Gastrocnemius medialis (tissue), 4 donors: ENCODE measurements at regions of chr7 and their contacts with region 1.

Region 1: GRCh38 chr7:33062782-33063443 is 337 bp upstream of the NT5C3A start:
- DNase-seq: peak; percentile 87 to 88
- ATAC-seq: peak; percentile 96
- H3K4me3 ChIP-seq: peak overlapping the region; percentile 74 to 97 (median 75)
- H3K27ac ChIP-seq: peak overlapping the region; percentile 90 to 98 (median 94)
- H3K4me1 ChIP-seq: peaks cover 22 to 30% of the 10 kb centered on the region in 2 donors
- H3K27me3 ChIP-seq: no peaks in the 10 kb centered on the region
- CTCF ChIP-seq: no peak
- POLR2A ChIP-seq: peak in 1 of 2 donors; percentile 53

Region 2: GRCh38 chr7:32495298-32496176 is 567.4 kb before region 1 on chr7 and contains the start of gene AVL9:
- in situ Hi-C with region 1: loop called in 1 of 4 experiments (anchors 25 kb)
- intact Hi-C with region 1: no loop called
- DNase-seq: peak; percentile 98
- ATAC-seq: peak; percentile 89 to 94
- H3K4me3 ChIP-seq: peak within 1 kb of the TSS; percentile 76 to 98 (median 88)
- H3K27ac ChIP-seq: peak within 1 kb of the TSS; percentile 91 to 98 (median 96)
- H3K4me1 ChIP-seq: peaks cover 21% of the 10 kb centered on the region in 2 donors
- H3K27me3 ChIP-seq: no peaks in the 10 kb centered on the region
- CTCF ChIP-seq: peak in 1 of 5 experiments; percentile 5
- POLR2A ChIP-seq: peak; percentile 79 to 88
- total RNA-seq, gene AVL9: 22.3 to 27.6 (median 25.5) TPM

Region 3: DNA sequence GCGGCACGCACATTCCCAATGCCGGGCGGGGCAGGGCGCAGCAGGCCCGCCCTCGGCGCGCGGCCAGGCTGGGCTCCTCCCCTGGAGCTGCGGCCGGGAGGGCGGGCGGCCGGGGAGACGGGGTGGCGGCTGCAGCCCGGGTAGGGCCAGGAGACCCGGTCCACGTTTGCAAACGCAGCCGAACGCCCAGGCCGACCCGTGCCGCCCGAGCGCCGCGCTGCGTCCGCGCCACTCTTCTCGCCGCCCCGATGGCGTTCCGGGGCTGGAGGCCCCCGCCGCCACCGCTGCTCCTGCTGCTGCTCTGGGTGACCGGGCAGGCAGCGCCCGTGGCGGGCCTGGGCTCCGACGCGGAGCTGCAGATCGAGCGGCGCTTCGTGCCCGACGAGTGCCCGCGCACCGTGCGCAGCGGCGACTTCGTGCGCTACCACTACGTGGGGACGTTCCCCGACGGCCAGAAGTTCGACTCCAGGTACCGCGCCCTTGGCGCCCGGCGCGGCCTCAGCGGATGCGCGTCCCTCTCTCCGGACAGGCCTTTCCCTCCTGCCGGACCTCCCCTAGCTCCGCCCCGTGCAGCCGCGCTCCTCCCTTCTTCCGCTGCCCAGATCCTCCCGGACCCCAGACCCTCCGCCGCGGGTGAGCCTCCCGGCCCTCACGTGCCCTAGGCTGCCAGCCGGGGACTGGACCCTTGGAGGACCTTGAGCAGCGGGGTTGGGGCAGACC is 105.4 kb before region 1 on chr7 and contains the start of gene FKBP9:
- in situ Hi-C with region 1: loop called in 1 of 4 experiments (anchors 25 kb)
- intact Hi-C with region 1: no loop called
- DNase-seq: peak; percentile 59 to 68
- ATAC-seq: peak; percentile 83 to 84
- H3K4me3 ChIP-seq: peak within 1 kb of the TSS; percentile 72 to 97 (median 84)
- H3K27ac ChIP-seq: peak within 1 kb of the TSS; percentile 76 to 93 (median 88)
- H3K4me1 ChIP-seq: peaks cover 8 to 16% of the 10 kb centered on the region in 2 donors
- H3K27me3 ChIP-seq: no peaks in the 10 kb centered on the region
- CTCF ChIP-seq: no peak
- POLR2A ChIP-seq: peak; percentile 44 to 59
- total RNA-seq, gene FKBP9: 32.1 to 72.1 (median 35.3) TPM

Region 4: GRCh38 chr7:33040803-33041516 is 22.0 kb before region 1 on chr7:
- in situ Hi-C with region 1: no loop called
- intact Hi-C with region 1: loop called (anchors 2 kb)
- DNase-seq: peak; percentile 73
- ATAC-seq: peak; percentile 90 to 91
- H3K4me3 ChIP-seq: peak overlapping the region; percentile 54 to 68 (median 62)
- H3K27ac ChIP-seq: peak overlapping the region; percentile 84 to 95 (median 90)
- H3K4me1 ChIP-seq: peaks cover 55 to 61% of the 10 kb centered on the region in 2 donors
- H3K27me3 ChIP-seq: no peaks in the 10 kb centered on the region
- CTCF ChIP-seq: no peak
- POLR2A ChIP-seq: peak; percentile 71 to 92

Region 5: DNA sequence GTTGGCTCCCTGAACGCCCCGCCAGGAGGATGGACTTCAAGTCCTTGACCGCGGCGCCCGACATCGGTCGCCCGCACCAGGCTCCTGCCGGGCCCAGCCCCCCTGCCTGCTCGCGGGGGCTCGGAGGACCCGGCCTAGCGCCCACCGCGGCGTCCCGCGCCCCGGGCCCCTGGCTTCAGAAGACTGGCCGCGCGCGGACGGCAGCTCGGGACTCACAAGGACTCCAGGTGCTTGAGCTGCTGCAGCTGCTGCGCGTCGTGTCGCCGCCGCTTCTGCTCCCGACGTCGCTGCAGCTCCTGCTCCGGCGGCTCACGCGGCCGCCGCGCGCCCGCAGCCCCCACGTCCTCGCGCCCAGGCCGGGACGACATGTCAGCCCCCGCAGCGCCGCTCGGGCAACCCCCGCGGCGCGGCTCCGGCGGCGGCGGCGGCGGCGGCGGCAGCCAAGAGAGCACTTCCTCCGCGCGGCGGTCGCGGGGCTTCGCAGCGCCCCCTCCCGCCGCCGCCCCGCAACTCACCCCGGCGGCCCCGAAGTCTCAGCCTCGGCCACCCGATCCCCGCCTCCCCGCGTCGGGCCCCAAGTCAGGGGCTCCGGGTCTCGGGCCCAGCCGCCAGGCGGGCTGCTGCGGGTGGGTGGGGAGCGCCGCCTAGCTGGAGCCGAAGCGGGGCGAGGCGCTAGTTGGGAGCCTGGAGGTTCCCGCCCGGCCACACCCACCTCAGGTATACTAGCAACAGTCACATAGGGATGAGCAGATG is 46.3 kb after region 1 on chr7 and contains the start of gene RP9:
- in situ Hi-C with region 1: no loop called
- intact Hi-C with region 1: loop called (anchors 1 kb)
- DNase-seq: peak; percentile 12 to 40
- ATAC-seq: peak; percentile 89 to 92
- H3K4me3 ChIP-seq: peak within 1 kb of the TSS; percentile 64 to 92 (median 80)
- H3K27ac ChIP-seq: peak within 1 kb of the TSS; percentile 64 to 86 (median 80)
- H3K4me1 ChIP-seq: peaks cover 25 to 31% of the 10 kb centered on the region in 2 donors
- H3K27me3 ChIP-seq: no peaks in the 10 kb centered on the region
- CTCF ChIP-seq: peak; percentile 45 to 78 (median 59)
- POLR2A ChIP-seq: peak; percentile 20 to 56
- total RNA-seq, gene RP9: 13.0 to 23.9 (median 20.1) TPM

Region 6: DNA sequence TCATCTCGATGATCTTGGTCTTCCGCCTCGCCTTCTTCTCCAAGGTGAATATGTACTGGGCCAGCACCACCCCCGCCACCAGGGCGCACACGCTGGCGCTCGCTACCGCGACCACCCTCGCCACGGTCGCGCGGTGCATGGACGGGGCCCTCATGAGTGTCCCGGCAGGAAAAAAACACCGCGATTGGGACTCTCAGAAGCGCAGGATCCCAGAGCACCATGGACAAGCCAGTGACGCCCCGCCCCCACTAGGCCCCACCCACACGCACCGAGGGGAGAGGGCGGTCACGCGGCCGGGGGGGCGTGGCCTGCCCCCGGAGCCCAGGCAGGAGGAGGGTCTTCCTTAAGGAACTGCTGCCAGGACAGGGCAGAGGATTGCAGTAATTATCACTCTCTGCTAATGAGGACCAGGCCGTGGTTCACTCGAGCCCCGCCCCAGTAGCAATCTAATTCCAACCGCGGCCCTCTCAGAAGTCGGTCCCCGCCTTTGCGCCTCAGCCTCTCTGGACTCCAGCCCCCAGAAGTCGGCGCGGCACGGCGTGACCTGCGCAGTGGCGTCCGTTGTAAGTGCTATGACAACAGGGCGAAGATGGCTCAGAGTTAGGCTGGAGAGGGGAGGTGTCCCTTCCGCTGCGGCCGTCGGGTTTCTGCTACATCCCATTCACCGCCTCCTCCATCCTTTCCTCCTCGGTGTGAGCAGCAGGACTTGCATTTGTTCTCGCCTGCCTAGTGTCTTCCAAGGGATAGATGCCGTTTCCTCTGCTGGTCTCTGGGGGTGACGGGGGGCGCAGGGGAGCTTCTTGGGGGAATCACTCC is 66.3 kb after region 1 on chr7 and contains the start of gene BBS9:
- in situ Hi-C with region 1: no loop called
- intact Hi-C with region 1: loop called (anchors 2 kb)
- DNase-seq: peak; percentile 86 to 89
- ATAC-seq: peak; percentile 99
- H3K4me3 ChIP-seq: peak within 1 kb of the TSS; percentile 78 to 96 (median 86)
- H3K27ac ChIP-seq: peak within 1 kb of the TSS; percentile 83 to 97 (median 90)
- H3K4me1 ChIP-seq: peaks cover 15 to 21% of the 10 kb centered on the region in 2 donors
- H3K27me3 ChIP-seq: no peaks in the 10 kb centered on the region
- CTCF ChIP-seq: peak in 2 of 5 experiments; percentile 5 to 19
- POLR2A ChIP-seq: peak; percentile 38 to 45
- total RNA-seq, gene BBS9: 3.5 to 6.5 (median 5.4) TPM